Posterior vena cava (tissue), 2 donors: ENCODE measurements at regions of chr2 and their contacts with region 1.

Region 1: DNA sequence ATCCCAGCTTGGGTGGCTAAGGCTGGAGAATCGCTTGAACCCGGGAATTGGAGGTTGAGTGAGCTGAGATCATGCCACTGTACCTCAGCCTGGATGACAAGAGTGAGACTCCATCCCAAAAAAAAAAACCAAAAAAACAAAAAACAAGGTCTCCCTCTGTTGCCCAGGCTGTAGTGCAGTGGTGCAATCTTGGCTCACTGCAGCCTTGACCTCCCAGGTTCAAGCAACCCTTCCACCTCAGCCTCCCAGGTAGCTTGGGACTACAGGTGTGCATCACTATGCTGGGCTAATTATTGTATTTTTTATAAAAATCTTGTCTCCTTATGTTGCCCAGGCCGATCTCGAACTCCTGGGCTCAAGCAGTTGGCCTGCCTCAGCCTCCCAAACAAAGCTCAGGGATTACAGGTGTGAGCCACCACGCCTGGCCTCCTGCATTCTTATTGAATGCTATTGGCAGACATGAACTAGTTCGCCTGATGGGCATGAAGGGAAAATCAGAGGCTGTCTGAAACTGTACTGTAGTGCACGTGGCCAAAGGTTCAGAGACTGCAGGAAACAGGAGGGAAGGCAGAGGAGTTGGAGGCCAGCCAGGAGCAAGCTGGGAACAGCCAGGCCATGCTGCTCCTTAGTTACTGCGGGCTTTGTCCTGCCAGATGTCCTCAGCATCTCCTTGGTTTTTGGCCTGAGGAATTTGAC is 16.0 kb upstream of the ASXL2 start:
- DNase-seq: no peak

Region 2: DNA sequence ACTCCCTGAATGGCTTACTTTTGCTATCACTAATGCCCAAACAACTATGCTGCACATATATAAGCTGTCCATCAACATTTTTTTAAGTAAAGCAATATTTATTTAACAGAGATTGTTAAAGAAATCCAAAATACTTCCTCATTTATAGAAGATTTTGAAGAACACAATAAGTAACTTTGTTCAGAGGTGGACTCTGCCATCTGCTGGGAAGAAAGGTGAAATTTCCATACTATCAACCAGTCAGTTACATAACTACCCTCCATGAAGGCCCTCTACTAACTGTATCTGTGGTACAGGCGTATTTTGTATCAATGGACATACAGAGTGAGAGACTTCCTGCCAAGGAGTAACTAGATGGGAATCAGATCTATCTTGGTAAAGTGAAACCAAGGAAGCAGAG is 326.9 kb before region 1 on chr2:
- intact Hi-C with region 1: no loop called
- DNase-seq: no peak

Region 3: DNA sequence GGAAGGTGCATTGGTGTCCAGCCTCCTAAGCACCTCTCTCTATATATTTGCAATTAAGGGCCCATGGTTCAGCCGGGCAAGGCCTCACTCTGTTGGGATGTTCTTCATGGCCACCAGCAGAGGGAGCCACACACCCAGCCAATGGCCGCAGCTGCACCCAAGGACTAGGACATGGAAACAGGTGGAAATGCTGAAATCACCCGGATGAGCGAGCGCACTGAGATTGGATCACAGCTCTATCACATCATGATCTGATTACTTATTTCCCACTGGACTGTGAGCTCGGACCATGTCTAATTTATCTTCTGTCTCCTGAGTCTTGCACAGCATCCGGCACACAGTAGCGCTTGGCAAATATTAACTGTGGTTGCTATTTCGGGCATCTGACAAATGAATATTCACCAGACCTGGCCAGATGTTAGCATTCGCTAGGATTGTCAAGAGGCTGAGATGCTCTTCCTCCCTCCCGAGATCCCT is 56.8 kb after region 1 on chr2:
- intact Hi-C with region 1: loop called in 1 of 2 experiments (anchors 2 kb)
- DNase-seq: peak; percentile 94